PC-3 (cell line): ENCODE measurements at regions of chr1 and their contacts with region 1.

Region 1: DNA sequence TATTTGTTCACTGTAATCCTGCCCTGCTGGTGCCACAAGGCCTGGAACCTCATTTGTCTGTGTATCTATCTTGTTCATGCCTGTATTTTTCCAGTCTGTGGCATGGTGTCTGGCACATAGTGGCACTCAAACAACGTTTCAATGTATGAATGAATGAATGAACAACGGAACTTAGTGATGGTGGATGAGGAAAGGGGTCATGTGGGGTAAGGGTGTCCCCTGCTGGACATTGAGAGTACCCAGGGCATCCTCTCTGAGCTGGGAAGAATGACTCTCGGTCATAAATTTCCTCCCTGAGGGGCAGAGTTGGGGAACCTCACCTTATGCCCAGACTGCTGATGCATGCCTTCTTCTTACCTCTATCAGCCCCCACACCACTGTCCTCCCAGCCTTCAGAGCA is 18.9 kb upstream of the ZNF683 start:
- DNase-seq: peak; percentile 73
- ATAC-seq: peak; percentile 79
- H3K4me3 ChIP-seq: no peak overlapping the region
- H3K27ac ChIP-seq: no peak overlapping the region
- H3K4me1 ChIP-seq: peaks cover 20% of the 10 kb centered on the region
- H3K27me3 ChIP-seq: no peaks in the 10 kb centered on the region
- CTCF ChIP-seq: peak; percentile 91

Region 2: DNA sequence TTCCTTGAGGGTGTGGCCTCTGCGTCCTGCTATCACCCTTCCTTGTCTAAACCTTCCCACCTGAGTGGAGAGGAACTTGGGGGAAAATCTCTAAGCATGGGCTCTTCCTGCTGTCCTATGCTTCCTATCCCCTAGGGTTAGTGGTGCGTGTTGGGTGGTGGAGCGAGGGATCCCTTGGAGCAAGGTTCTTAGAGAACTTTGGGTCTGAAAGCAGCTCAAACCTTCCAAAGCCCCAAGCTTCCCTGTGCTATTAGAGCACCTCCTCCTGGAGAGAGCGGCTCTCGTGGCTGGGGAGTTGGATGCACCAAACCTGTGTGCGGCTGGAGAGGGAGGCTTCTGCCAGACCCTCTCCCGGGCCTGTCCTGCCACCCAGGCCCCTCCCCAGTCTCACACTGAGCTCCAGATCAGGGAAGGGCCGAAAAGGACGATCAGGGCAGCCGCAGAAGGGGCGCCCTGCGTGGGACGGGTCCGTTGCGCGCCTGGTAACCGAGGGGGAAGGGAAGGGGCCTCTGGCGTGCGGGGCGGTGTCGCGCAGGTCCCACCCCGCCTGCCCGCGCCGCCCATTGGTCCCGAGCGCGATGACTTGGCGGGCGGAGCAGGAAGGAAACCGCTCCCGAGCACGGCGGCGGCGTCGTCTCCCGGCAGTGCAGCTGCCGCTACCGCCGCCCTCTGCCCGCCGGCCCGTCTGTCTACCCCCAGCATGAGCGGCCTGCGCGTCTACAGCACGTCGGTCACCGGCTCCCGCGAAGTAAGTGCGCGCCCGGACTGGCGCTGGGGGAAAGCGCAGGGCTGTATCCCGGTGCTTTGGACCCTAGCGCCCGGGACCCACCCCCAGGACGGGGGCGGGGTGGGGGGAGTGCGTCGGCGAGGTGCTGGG is 111.8 kb before region 1 on chr1 and contains the start of gene SH3BGRL3:
- CTCF ChIA-PET with region 1: interaction called, 3 read pairs
- POLR2A ChIA-PET with region 1: no interaction called
- intact Hi-C with region 1: loop called (anchors 1 kb)
- DNase-seq: peak; percentile 87
- ATAC-seq: peak; percentile 38
- H3K4me3 ChIP-seq: peak within 1 kb of the TSS; percentile 75
- H3K27ac ChIP-seq: peak within 1 kb of the TSS; percentile 99
- H3K4me1 ChIP-seq: peaks cover 84% of the 10 kb centered on the region
- H3K27me3 ChIP-seq: no peaks in the 10 kb centered on the region
- CTCF ChIP-seq: peak; percentile 56
- total RNA-seq, gene SH3BGRL3: 181 and 193 TPM in 2 replicates

Region 3: DNA sequence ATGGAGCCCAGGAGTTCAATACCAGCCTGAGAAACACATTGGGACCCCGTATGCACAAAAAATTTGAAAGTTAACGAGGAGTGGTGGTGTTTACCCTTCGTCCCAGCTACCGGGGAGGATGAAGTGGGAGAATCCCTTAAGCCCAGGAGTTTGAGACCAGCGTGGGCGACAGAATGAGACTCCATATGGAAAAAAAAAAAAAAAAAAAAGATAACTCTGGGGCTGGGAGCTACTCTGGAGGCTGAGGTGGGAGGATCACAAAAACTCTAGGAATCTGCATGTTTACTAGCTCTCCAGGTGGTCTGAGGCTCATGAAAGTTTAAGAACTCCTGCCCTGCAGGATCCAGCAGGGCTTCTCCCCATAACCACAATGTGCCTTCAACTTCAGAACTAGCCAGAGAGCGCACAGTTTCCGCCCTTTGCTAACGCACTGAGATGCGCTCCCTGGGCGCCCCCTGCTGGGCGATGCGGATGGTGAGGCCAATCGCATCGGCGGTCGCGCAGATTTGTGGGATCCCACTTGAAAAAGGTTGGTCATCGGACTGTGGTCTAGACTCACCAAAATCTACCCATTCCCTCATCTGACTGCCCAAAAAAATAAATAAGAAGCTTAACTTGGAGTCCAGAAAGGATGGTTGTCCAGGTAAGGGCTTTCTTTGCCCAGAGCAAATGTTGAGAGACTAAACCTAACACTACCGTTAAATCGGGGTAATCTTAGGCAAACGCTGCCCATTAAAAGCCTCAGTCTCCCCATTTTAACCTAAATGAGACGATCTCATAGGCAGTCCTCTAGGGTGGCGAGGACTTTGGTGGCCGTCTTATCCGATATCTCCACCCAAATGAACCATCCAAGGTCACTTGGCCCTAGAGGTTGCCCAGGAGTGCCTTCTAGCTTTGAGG is 27.7 kb before region 1 on chr1:
- CTCF ChIA-PET with region 1: interaction called, 4 read pairs
- POLR2A ChIA-PET with region 1: no interaction called
- intact Hi-C with region 1: loop called (anchors 1 kb)
- DNase-seq: peak; percentile 80
- ATAC-seq: peak; percentile 83
- H3K4me3 ChIP-seq: no peak overlapping the region
- H3K27ac ChIP-seq: no peak overlapping the region
- H3K4me1 ChIP-seq: peaks cover 5% of the 10 kb centered on the region; the same call in 1 of the 2 replicates
- H3K27me3 ChIP-seq: no peaks in the 10 kb centered on the region
- CTCF ChIP-seq: peak; percentile 98

Region 4: GRCh38 chr1:26417111-26417759 is 25.8 kb after region 1 on chr1:
- CTCF ChIA-PET with region 1: interaction called, 10 read pairs
- POLR2A ChIA-PET with region 1: no interaction called
- intact Hi-C with region 1: no loop called
- DNase-seq: peak; percentile 85
- ATAC-seq: peak; percentile 99
- H3K4me3 ChIP-seq: no peak overlapping the region
- H3K27ac ChIP-seq: no peak overlapping the region
- H3K4me1 ChIP-seq: peaks cover 5% of the 10 kb centered on the region
- H3K27me3 ChIP-seq: peaks cover 33% of the 10 kb centered on the region
- CTCF ChIP-seq: peak; percentile 82